ENCODE measurements at regions of chr1 and their contacts with region 1.

Region 1: GRCh38 chr1:183454390-183454789 is 17.9 kb upstream of the SMG7 start:
- DNase-seq: no peak
- ATAC-seq: no peak
- H3K4me3 ChIP-seq: no peak overlapping the region
- H3K27ac ChIP-seq: no peak overlapping the region
- H3K4me1 ChIP-seq: no peaks in the 10 kb centered on the region
- H3K27me3 ChIP-seq: peaks cover 9% of the 10 kb centered on the region
- CTCF ChIP-seq: no peak
- POLR2A ChIP-seq: no peak
- RAD21 ChIP-seq: no peak

Region 2: GRCh38 chr1:183318433-183318832 is 136.0 kb before region 1 on chr1:
- CTCF ChIA-PET with region 1: no interaction called
- POLR2A ChIA-PET with region 1: interaction called, 10 read pairs
- dilution Hi-C with region 1: no loop called
- in situ Hi-C with region 1: no loop called
- intact Hi-C with region 1: no loop called
- DNase-seq: peak; percentile 95
- ATAC-seq: peak; percentile 97
- H3K4me3 ChIP-seq: no peak overlapping the region
- H3K27ac ChIP-seq: peak overlapping the region; percentile 20; the same call in 1 of the 2 replicates
- H3K4me1 ChIP-seq: peaks cover 10% of the 10 kb centered on the region
- H3K27me3 ChIP-seq: peaks cover 2% of the 10 kb centered on the region; the same call in 1 of the 2 replicates
- CTCF ChIP-seq: peak; percentile 81
- POLR2A ChIP-seq: no peak
- RAD21 ChIP-seq: peak; percentile 85

Region 3: DNA sequence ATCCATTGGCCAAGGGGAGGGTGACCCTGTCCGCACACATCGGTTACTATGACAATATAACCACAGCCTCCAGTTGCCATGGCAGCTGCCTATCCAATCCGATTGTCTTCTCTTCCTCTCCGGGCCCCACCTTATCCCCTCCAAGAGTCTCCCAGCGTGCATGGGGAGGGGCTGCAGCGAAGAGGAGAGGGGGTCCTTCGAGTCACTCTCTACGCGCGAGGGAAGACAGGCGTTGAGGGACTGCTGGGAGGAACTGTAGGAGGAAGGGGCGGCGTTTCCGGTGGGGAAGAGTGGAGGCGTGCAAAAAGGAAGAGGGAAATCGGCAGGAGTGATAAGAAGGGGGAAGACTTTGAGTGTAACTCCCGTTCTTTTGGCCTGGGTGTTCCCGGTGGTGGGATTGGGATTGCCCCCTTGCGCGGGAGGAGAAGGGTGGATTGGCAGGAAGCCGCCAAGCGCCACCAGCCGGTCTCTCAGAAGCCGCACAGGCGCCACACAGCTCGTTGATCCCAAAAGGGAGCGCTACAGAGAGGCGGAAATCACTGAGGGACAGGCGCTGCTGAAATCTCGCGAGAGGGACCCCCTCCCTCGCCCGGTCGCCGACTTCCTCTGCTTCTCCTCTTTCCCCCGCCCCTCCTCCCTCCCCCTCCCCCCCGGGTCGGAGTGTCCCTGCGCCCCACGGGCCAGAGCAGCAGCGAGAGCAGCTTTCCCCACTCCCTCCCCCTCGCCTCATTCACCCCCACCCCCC is 17.5 kb after region 1 on chr1:
- CTCF ChIA-PET with region 1: no interaction called
- POLR2A ChIA-PET with region 1: no interaction called
- dilution Hi-C with region 1: no loop called
- in situ Hi-C with region 1: no loop called
- intact Hi-C with region 1: no loop called
- DNase-seq: peak; percentile 98
- ATAC-seq: peak; percentile 84
- H3K4me3 ChIP-seq: peak overlapping the region; percentile 99
- H3K27ac ChIP-seq: peak overlapping the region; percentile 98
- H3K4me1 ChIP-seq: peaks cover 2% of the 10 kb centered on the region; the same call in 1 of the 2 replicates
- H3K27me3 ChIP-seq: peaks cover under 1% of the 10 kb centered on the region; the same call in 1 of the 2 replicates
- CTCF ChIP-seq: no peak
- POLR2A ChIP-seq: no peak
- RAD21 ChIP-seq: no peak

Region 4: DNA sequence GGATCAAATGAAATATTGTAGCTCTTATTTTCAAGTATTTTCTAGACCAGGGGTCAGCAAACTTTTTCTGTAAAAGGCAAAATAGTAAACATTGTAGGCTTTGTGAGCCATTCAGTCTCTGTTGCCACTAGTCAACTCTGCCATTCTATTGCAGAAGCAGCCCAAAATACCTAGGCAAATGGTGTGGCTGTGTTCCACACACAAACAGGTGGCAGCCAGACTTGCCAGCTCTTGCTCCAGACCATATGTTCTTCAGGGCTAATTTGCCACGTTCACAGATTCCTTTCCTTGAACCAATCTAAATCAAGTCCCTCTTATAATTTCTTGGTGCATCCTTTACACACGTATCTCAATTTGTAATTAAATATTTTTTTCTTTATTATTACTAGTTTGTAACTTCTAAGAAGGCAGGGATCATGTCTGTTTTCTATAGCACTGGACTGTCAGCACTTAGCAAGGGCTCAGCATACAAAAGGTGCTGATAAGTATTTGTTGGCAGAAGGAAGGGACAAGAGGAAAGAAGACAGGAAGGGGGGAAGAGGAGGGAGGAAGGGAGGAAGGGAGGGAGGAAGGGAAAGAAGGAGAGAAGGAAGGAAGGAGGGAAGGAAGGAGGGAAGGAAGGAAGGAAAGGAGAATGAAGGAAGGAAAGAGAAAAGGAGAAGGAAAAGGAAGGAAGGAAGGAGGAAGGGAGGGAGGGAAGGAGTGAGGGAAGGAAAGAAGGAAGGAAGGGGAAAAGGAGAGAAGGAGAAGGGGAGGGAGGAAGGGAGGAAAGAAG is 1406.8 kb after region 1 on chr1:
- CTCF ChIA-PET with region 1: no interaction called
- POLR2A ChIA-PET with region 1: no interaction called
- dilution Hi-C with region 1: no loop called
- in situ Hi-C with region 1: no loop called
- intact Hi-C with region 1: no loop called
- DNase-seq: no peak
- ATAC-seq: no peak
- H3K4me3 ChIP-seq: no peak overlapping the region
- H3K27ac ChIP-seq: no peak overlapping the region
- H3K4me1 ChIP-seq: no peaks in the 10 kb centered on the region
- H3K27me3 ChIP-seq: no peaks in the 10 kb centered on the region
- CTCF ChIP-seq: no peak
- POLR2A ChIP-seq: no peak
- RAD21 ChIP-seq: no peak